ENCODE measurements at regions of chr16 and their contacts with region 1.

Region 1: DNA sequence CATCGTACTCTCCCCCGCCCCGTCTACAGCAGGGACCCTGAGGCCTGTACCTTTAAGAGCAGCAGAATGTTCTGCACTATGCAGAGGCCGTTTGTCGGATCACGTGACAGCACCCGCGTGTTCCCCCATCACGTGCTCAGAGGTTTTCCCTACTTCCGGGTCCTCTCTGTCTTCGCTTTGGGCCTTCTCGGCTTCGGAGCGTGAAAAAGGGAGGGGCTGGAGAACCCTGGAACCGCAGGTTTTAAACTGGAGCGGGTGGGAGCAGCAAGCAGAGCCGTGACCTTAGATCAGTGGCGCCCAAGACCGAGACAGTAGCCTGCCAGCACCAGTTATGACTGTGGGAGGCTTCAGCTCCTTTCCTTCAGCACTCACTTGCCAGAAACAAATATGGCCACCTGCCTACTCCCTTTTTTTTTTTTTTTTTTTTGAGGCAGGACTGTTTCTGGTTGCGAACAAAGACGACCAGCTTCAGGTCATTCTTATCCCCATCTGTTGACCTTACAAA is at the start of gene CLN3:
- DNase-seq: peak; percentile 97
- H3K4me3 ChIP-seq: peak within 1 kb of the TSS; percentile 73 to 97 (median 82)
- H3K27ac ChIP-seq: peak within 1 kb of the TSS; percentile 92 to 93 (median 93)
- H3K4me1 ChIP-seq: peaks cover 0 to 20% (median 13%) of the 10 kb centered on the region in 4 donors
- H3K27me3 ChIP-seq: no peaks in the 10 kb centered on the region
- CTCF ChIP-seq: no peak
- EP300 ChIP-seq: no peak
- POLR2A ChIP-seq: no peak
- total RNA-seq, gene CLN3: 16.8 to 23.0 (median 17.9) TPM

Region 2: GRCh38 chr16:28168991-28169554 is 322.9 kb before region 1 on chr16:
- intact Hi-C with region 1: no loop called
- DNase-seq: no peak
- H3K4me3 ChIP-seq: no peak overlapping the region
- H3K27ac ChIP-seq: no peak overlapping the region
- H3K4me1 ChIP-seq: peaks cover 0 to 9% (median 3%) of the 10 kb centered on the region in 4 donors
- H3K27me3 ChIP-seq: no peaks in the 10 kb centered on the region
- CTCF ChIP-seq: no peak
- EP300 ChIP-seq: no peak
- POLR2A ChIP-seq: no peak

Region 3: DNA sequence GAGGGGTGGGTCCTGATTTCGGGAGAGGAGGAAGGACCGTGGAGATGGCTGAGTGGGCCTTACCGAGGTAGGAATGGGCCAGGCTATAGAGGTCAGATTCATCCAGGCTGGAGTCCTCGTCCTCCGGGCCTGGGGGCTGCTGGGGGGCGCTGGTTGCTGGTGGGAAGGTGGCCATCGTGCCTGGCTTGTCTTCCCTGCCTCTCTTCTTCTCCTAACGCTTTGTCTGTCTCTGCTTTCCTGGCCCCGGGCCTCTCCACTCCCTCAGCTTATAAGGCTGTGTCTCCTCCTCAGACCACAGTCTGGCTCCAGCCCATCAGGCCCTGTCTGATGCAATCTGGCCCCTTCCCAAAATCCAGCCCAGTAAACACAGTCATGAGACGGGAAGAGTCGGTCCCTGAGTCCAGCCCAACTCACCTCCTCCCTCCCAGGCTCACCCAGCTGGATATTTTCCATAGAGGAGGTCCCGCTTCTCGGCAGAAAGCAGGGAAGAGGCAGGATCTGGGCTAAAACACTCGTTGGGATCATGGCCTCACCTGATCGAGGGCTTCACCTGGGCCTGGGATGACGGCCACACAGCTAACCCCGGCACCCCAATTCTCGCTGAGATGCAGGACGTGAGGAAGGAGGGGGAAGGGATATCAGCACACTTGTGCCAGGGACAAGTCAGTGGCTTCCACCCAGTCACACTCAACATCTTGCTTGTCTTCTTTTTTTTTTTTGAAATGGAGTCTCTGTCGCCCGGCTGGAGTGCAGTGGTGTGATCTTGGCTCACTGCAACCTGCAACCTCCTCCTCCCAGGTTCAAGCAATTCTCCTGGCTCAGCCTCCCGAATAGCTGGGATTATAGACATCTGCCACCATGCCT is 46.9 kb after region 1 on chr16 and contains the start of gene NUPR1:
- intact Hi-C with region 1: loop called (anchors 2 kb)
- DNase-seq: peak; percentile 100
- H3K4me3 ChIP-seq: peak within 1 kb of the TSS; percentile 55 to 62 (median 57)
- H3K27ac ChIP-seq: peak within 1 kb of the TSS; percentile 87 to 97 (median 94)
- H3K4me1 ChIP-seq: peaks cover 0 to 51% (median 31%) of the 10 kb centered on the region in 4 donors
- H3K27me3 ChIP-seq: no peaks in the 10 kb centered on the region
- CTCF ChIP-seq: no peak
- EP300 ChIP-seq: peak in 2 of 4 donors; percentile 63 to 86
- POLR2A ChIP-seq: peak; percentile 79 to 91
- total RNA-seq, gene NUPR1: 54.3 to 83.9 (median 63.4) TPM

Region 4: GRCh38 chr16:28553776-28554633 is 62.0 kb after region 1 on chr16 and contains the start of gene SGF29:
- intact Hi-C with region 1: loop called (anchors 1 kb)
- DNase-seq: peak; percentile 98
- H3K4me3 ChIP-seq: peak within 1 kb of the TSS; percentile 50 to 70 (median 63)
- H3K27ac ChIP-seq: peak within 1 kb of the TSS; percentile 95 to 98 (median 96)
- H3K4me1 ChIP-seq: peaks cover 0 to 25% (median 22%) of the 10 kb centered on the region in 4 donors
- H3K27me3 ChIP-seq: no peaks in the 10 kb centered on the region
- CTCF ChIP-seq: peak in 1 of 4 experiments; percentile 19
- EP300 ChIP-seq: no peak
- POLR2A ChIP-seq: peak; percentile 81 to 94
- total RNA-seq, gene SGF29: 38.5 to 58.7 (median 44.9) TPM

Measured in sigmoid colon (tissue), 7 donors.